Posterior vena cava (tissue), 2 donors: ENCODE measurements at regions of chr13 and their contacts with region 1.

Region 1: GRCh38 chr13:39226359-39226758 is 188.1 kb downstream of the NHLRC3 start:
- DNase-seq: no peak

Region 2: GRCh38 chr13:39245688-39246087 is 19.3 kb after region 1 on chr13:
- intact Hi-C with region 1: no loop called
- DNase-seq: no peak

Region 3: DNA sequence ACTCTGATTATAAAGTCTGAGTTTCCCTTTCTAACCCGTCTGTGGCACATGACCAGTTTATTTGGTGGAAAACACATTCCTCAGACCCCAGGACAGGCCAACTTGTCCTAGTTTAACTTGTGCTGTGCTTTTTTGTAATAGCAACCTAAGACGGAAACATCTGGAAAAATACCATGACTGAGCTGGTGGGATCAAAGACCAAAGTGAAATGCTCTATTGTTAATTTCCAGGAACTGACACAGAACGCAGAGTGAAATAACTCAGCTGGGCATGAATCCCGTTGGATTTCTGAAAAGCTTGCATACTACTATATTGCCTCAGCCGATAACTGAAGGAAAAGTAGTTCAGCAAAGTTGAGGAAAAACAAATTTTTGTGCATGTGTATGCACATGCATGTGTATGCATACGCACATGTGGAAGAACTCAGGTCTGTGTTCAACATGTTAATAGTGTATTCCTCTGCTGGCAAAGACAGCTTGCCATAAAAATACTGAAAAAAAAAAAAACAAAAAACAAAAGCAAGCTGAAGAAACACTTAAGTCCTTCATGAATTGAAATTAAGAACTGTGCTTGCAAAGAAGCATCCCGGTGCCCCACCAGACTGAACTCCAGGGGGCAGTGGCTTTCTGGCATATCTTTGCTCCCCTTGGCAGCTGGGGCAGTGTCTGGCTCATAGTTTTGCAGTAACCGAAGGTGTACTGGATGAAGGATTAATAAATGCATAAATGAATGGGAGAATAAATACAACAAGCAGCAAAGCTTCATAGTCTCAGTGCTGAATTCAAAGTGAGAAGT is 188.8 kb after region 1 on chr13:
- intact Hi-C with region 1: no loop called
- DNase-seq: no peak

Region 4: DNA sequence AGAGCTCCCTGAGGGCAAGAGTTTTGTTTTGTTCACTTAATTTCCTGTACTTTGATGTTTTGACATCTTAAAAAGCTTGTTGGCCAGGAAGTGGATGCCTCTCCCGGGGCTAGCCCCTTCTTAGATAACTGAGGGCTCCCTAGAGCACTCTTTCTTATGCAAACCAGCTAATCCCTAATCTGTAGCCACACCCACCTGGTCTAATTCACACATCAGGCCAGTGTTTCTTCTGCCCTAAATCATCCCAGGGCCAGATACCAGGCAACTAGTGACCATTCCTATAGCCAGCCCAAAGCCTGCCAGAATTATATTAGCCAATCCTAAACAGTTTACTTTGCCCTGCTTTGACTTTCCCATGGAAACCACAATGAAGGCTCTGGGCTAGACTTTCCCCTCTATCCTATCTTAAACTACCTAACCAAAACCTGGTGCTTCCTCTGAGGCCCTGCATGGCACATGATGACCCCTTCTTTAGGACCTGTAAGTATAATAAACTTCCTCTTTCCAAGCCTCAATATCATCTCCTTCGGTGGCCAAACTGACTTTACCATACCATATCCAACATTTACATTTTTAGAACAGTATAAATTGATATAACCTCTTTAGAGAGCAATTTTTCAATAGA is 1859.7 kb after region 1 on chr13:
- intact Hi-C with region 1: loop called in 1 of 2 experiments (anchors 5 kb)
- DNase-seq: no peak